ENCODE measurements at regions of chr1 and their contacts with region 1.

Region 1: GRCh38 chr1:234309598-234310459 is 63.4 kb upstream of the COA6 start:
- DNase-seq: peak; percentile 87
- H3K4me3 Mint-ChIP-seq: no peak overlapping the region
- H3K27ac Mint-ChIP-seq: no peak overlapping the region
- H3K4me1 Mint-ChIP-seq: peaks cover 6% of the 10 kb centered on the region
- H3K27me3 Mint-ChIP-seq: peaks cover 2% of the 10 kb centered on the region

Region 2: DNA sequence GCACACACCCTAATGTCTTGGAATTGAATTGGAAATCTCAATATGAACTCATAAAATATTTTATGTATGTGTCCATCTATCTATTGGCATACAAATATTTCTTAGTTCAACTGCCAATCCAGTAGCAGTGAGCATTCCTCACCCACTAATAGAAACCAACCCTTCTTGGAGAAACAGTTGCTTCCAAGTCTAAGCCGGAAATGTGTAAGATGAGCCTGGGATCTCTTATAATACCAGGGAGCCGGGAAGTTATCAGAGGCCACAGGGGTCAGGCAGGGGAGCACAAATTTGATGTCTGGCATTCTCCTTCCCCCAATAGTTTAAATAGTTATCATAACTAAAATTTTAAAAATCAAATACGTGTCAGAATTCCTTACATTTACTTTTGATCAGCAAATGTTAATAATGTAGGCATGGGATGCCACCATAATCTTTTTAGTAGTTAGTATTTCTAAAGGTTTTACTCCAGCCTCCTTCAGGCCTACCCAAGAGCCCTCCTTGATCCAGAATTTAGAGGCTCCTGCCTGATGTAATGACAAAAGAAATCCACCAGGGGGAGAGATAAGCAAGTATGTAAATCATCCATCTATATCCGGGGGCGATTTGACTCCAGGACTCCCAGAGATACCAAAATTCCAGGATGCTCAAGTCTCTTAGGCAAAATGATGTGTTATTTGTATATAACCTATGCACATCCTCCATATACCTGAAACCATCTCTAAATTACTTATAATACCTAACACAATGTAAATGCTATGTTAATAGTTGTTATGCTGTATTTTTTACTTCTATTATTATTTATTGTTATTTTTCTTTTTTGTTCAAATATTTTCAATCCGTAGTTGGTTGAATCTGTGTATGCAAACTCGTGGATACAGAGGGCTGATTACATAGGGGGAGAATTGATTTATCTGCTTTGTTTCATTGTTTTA is 155.2 kb before region 1 on chr1:
- CTCF ChIA-PET with region 1: interaction called, 16 read pairs
- intact Hi-C with region 1: loop called (anchors 1 kb)
- DNase-seq: peak; percentile 31
- H3K4me3 Mint-ChIP-seq: no peak overlapping the region
- H3K27ac Mint-ChIP-seq: no peak overlapping the region
- H3K4me1 Mint-ChIP-seq: no peaks in the 10 kb centered on the region
- H3K27me3 Mint-ChIP-seq: no peaks in the 10 kb centered on the region

Region 3: DNA sequence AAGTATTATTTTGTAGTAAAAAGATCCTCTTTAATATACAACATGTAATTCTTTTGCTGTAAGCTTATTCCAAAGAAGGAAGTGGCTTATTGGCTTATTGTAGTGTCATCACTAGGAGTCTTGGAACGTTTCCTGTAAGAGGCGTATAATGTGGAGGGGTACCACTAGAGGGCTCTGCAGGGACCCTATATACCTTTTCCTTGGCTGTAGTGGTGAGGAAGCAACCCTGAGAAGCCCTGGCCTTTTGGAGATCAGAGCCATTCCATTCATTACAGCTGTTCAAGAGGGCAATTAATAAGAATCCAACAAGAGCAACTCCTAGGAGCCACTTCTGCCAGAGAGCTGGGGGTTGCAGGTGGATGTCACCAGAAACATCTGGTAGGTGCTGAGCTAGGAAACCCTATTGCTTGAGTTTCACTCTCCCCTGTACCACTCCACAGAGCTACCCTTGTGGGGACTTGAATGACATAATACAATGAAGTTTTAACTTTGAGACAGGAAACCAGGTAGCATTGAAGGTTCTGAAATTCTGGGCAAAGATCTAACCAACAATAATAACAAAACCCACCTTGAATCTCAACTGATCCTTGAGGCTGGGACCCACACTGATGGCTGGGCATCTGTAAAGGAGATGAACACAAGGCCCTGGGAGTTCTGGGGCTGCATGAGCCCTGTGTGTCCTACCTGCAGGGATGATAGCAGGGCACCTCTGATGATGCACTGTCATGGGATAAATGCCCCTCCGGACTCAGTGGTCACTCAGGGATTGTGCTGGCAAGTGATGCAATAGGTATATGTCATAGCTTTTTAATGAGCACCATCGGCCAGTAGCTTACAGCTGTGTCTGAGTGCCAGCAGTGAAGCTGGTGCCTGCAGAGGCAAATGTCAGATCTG is 96.8 kb before region 1 on chr1:
- CTCF ChIA-PET with region 1: interaction called, 155 read pairs
- intact Hi-C with region 1: loop called (anchors 1 kb)
- DNase-seq: peak; percentile 56
- H3K4me3 Mint-ChIP-seq: no peak overlapping the region
- H3K27ac Mint-ChIP-seq: no peak overlapping the region
- H3K4me1 Mint-ChIP-seq: peaks cover 12% of the 10 kb centered on the region
- H3K27me3 Mint-ChIP-seq: peaks cover 43% of the 10 kb centered on the region

Region 4: DNA sequence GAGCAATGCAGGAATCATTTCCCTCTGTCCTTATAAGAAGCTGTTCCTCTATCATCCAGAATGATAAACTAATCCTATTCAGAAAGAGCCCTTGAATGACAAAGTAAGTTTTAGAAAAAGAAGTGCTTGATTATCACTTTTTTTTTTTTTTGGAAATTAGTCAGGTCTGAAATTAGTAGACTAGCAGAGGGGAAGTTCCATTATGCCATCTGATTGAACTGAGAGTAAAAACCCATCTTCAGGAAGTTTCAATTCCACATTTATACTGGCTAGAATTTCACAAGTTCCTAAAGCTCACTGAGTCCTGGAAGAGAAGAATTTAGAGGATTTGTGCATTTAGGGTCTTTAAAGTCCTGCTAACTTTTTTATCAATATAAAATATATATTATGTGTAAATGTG is 65.3 kb before region 1 on chr1:
- CTCF ChIA-PET with region 1: interaction called, 22 read pairs
- intact Hi-C with region 1: no loop called
- DNase-seq: no peak
- H3K4me3 Mint-ChIP-seq: no peak overlapping the region
- H3K27ac Mint-ChIP-seq: no peak overlapping the region
- H3K4me1 Mint-ChIP-seq: peaks cover 13% of the 10 kb centered on the region
- H3K27me3 Mint-ChIP-seq: peaks cover 22% of the 10 kb centered on the region

Region 5: DNA sequence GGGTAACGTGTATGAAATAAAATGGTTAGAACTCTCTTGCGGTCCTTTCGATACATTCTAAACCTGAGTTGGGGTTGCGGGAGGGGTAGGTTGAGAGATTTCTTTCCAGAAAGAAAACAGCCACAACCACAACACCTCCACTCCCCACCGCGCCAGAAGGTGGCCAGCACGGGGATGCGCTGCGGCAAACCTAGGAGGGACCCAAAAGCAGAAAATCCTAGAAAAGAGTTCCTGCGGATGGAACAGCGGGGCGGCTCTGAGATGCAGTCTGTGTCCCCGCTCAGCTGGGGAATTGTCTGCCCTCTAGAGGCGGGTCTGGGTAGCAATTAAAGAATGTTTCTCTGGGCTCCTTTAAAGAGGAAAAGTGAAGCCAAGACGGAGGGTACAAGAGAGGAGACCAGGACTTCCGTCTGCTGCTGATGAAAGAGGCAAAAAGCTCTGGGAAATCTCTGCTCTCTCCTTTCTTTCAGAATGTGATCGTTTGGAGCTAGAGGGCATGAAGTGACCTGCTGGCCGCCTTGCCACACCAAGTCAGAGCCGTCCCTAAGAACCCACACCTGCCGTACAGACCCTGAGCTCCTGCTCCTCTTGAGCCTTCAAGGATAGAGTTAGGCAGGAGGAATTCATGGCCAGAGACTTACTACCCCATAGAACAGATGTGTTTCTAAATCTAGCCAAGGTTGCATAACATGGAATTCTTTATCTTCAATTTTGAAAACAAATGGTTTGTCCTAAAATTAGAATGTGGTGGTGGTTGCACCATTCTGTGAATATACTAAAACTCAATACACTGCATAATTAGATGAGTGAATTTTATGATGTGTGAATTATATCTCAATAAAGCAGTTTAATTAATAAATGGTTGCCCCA is 16.9 kb after region 1 on chr1:
- CTCF ChIA-PET with region 1: interaction called, 79 read pairs
- intact Hi-C with region 1: no loop called
- DNase-seq: peak; percentile 81
- H3K4me3 Mint-ChIP-seq: peak overlapping the region; percentile 75
- H3K27ac Mint-ChIP-seq: peak overlapping the region; percentile 41
- H3K4me1 Mint-ChIP-seq: peaks cover 13% of the 10 kb centered on the region
- H3K27me3 Mint-ChIP-seq: peaks cover 14% of the 10 kb centered on the region